Endothelial cell of umbilical vein (primary cell): ENCODE measurements at regions of chr22 and their contacts with region 1.

Region 1: GRCh38 chr22:20885557-20886323 is 26.9 kb downstream of the SNAP29 start:
- DNase-seq: peak; percentile 88
- H3K4me3 ChIP-seq: no peak overlapping the region
- H3K27ac ChIP-seq: no peak overlapping the region
- H3K4me1 ChIP-seq: peaks cover 3% of the 10 kb centered on the region
- H3K27me3 ChIP-seq: no peaks in the 10 kb centered on the region
- CTCF ChIP-seq: peak; percentile 88 to 96
- POLR2A ChIP-seq: no peak

Region 2: DNA sequence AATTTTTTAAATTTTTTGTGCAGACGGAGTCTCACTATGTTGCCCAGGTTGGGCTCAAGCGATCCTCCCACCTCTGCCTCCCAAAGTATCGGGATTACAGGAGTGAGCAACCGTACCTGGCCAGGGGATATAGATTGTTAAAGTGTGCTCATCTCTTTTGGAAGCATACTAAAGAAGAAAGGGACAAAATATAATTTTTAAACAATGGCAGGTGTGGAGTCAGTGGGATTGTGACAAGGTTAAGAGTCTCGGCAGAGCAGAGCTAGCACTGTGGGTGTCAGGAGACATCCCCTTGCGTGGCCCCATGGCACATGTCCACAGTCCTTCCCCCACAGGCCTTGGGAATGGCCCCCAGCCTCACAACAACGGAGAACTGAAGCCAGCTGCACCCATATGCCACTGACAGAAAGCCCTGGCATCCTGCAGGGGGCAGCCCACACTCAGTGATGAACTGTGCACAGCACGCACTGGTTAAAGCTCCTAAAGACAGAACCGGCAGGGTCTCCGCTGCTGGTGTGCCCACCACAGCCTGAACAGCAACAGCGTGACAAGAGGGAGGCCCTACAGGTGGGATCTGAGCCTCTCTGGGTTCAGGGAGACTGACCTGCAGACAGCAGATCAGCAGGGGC is 81.9 kb before region 1 on chr22:
- CTCF ChIA-PET with region 1: interaction called, 26 read pairs
- POLR2A ChIA-PET with region 1: no interaction called
- dilution Hi-C with region 1: no loop called
- intact Hi-C with region 1: no loop called
- DNase-seq: peak; percentile 27
- H3K4me3 ChIP-seq: no peak overlapping the region
- H3K27ac ChIP-seq: no peak overlapping the region
- H3K4me1 ChIP-seq: no peaks in the 10 kb centered on the region
- H3K27me3 ChIP-seq: no peaks in the 10 kb centered on the region
- CTCF ChIP-seq: peak; percentile 42 to 69
- POLR2A ChIP-seq: no peak

Region 3: GRCh38 chr22:20857247-20857643 is 28.5 kb before region 1 on chr22:
- CTCF ChIA-PET with region 1: no interaction called
- POLR2A ChIA-PET with region 1: no interaction called
- dilution Hi-C with region 1: no loop called
- intact Hi-C with region 1: no loop called
- DNase-seq: no peak
- H3K4me3 ChIP-seq: peak overlapping the region in 1 of 3 experiments; percentile 79
- H3K27ac ChIP-seq: no peak overlapping the region
- H3K4me1 ChIP-seq: peaks cover 17% of the 10 kb centered on the region
- H3K27me3 ChIP-seq: no peaks in the 10 kb centered on the region
- CTCF ChIP-seq: no peak
- POLR2A ChIP-seq: no peak

Region 4: GRCh38 chr22:20875296-20875695 is 10.4 kb before region 1 on chr22:
- CTCF ChIA-PET with region 1: interaction called, 10 read pairs
- POLR2A ChIA-PET with region 1: no interaction called
- dilution Hi-C with region 1: no loop called
- intact Hi-C with region 1: no loop called
- DNase-seq: no peak
- H3K4me3 ChIP-seq: no peak overlapping the region
- H3K27ac ChIP-seq: no peak overlapping the region
- H3K4me1 ChIP-seq: no peaks in the 10 kb centered on the region
- H3K27me3 ChIP-seq: no peaks in the 10 kb centered on the region
- CTCF ChIP-seq: no peak
- POLR2A ChIP-seq: no peak

Region 5: DNA sequence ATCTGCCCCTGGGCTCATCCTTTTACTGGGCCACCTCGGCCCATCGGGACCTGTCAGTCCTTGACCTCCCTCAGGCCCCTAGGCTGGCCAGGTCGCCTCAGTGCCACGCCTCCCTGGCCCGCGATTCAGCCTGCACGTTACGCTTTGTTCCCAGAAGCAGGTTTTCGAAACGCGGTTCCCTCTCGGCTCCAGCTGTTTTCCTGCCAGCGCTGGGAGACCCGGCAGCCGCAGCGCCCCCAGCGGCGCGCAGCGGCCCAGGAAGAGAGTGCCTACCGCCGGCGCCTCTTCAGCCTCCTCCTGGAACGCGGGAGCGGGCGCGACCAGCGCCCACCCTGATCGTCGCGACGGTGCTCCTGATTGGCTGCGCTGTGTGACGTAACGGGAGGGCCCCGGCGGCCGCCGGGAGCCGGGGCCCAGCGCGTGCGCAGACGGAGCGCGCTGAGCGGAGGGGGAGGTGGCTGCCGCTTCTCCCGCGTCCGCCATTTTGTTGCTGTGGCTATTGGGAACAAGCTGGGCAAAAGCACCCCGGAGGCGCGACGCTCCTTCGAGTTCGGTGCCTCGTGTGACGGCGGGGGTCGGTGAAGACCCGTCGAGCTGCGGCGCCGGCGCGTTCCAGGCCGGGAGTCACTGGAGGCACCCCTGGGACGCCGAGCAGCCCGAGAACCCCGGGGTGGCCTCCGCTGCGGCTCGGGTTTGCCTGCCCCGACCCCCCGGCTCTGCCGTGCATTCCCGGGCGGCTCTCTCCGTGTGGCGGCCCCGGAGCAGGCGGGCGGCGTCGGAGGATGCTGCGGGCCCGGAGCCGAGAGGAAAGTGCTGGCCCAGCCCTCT is 31.5 kb after region 1 on chr22 and contains the start of gene CRKL:
- CTCF ChIA-PET with region 1: interaction called, 18 read pairs
- POLR2A ChIA-PET with region 1: interaction called, 3 read pairs
- dilution Hi-C with region 1: no loop called
- intact Hi-C with region 1: loop called (anchors 1 kb)
- DNase-seq: peak; percentile 97
- H3K4me3 ChIP-seq: peak within 1 kb of the TSS; percentile 69 to 100 (median 97)
- H3K27ac ChIP-seq: peak within 1 kb of the TSS; percentile 56
- H3K4me1 ChIP-seq: peaks cover 6% of the 10 kb centered on the region
- H3K27me3 ChIP-seq: no peaks in the 10 kb centered on the region
- CTCF ChIP-seq: peak; percentile 96 to 100
- POLR2A ChIP-seq: peak; percentile 80
- total RNA-seq, gene CRKL: 47.1 and 50.6 TPM in 2 replicates

Region 6: GRCh38 chr22:20964090-20964798 is 78.5 kb after region 1 on chr22:
- CTCF ChIA-PET with region 1: interaction called, 6 read pairs
- POLR2A ChIA-PET with region 1: no interaction called
- dilution Hi-C with region 1: no loop called
- intact Hi-C with region 1: loop called (anchors 1 kb)
- DNase-seq: no peak
- H3K4me3 ChIP-seq: no peak overlapping the region
- H3K27ac ChIP-seq: no peak overlapping the region
- H3K4me1 ChIP-seq: no peaks in the 10 kb centered on the region
- H3K27me3 ChIP-seq: peaks cover 4 to 18% of the 10 kb centered on the region in 2 experiments
- CTCF ChIP-seq: no peak
- POLR2A ChIP-seq: no peak

Region 7: GRCh38 chr22:21001560-21002325 is 116.0 kb after region 1 on chr22 and contains the start of gene THAP7:
- CTCF ChIA-PET with region 1: interaction called, 9 read pairs
- POLR2A ChIA-PET with region 1: interaction called, 7 read pairs
- dilution Hi-C with region 1: no loop called
- intact Hi-C with region 1: loop called (anchors 5 kb)
- DNase-seq: peak; percentile 95
- H3K4me3 ChIP-seq: peak within 1 kb of the TSS; percentile 77 to 86 (median 86)
- H3K27ac ChIP-seq: peak within 1 kb of the TSS; percentile 88
- H3K4me1 ChIP-seq: peaks cover 22% of the 10 kb centered on the region
- H3K27me3 ChIP-seq: no peaks in the 10 kb centered on the region
- CTCF ChIP-seq: no peak
- POLR2A ChIP-seq: peak; percentile 85
- total RNA-seq, gene THAP7: 13.5 and 14.9 TPM in 2 replicates